ENCODE measurements at regions of chr6 and their contacts with region 1.

Region 1: DNA sequence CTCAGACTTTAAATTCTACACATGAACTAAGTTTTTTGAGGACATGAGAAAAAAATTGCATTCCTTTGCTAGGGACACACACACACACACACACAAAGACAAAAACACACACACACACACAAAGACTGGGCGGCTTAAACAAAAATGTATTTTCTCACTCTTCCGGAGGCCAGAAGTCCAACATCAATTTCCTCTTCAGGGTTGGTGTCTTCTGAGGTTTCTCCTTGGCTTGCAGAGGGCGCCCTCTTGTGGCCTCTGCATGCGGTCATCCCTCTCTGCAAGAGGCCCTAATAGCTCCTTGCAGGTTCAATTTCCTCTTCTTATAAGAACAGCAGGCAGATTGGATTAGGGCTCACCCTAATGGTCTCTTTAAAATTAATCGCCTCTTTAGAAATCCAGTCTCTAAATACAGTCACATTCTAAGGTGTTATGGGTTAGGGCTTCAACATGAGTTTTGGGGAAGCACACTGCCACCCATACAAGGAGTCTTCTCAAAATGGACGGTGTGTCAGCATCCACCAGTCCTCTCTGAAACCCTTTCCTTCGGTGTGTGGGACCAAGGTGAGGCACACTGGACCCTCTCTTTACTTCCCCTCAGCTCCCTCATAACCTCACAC is 61.4 kb downstream of the GPR6 start:
- DNase-seq: peak; percentile 90
- H3K4me3 Mint-ChIP-seq: peak overlapping the region; percentile 68
- H3K27ac Mint-ChIP-seq: peak overlapping the region; percentile 22
- H3K4me1 Mint-ChIP-seq: peaks cover 15% of the 10 kb centered on the region
- H3K27me3 Mint-ChIP-seq: no peaks in the 10 kb centered on the region
- CTCF ChIP-seq: peak; percentile 85

Region 2: DNA sequence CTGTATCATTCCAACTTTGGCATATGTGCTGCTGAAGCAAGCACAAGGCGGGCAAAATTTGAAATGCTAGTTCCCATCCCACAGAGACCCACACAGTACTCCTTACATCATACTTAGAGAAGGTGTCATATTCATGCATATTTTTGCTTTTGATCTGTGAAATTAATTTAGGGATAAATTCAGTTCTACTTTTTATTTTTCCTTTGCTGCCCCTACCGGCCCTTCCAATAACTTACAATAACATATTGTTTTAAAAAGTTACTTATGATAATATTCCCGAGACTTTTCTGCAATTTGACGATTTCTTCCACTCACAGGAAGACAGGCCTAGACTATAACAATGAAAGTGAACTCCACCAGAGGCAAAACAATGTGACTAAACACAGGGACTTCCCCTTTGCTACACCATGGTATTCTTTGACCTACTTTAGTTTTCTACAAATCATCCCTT is 979.9 kb before region 1 on chr6:
- CTCF ChIA-PET with region 1: no interaction called
- POLR2A ChIA-PET with region 1: no interaction called
- intact Hi-C with region 1: no loop called
- DNase-seq: peak; percentile 71
- H3K4me3 Mint-ChIP-seq: peak overlapping the region; percentile 61
- H3K27ac Mint-ChIP-seq: peak overlapping the region; percentile 96
- H3K4me1 Mint-ChIP-seq: peaks cover 52% of the 10 kb centered on the region
- H3K27me3 Mint-ChIP-seq: no peaks in the 10 kb centered on the region
- CTCF ChIP-seq: peak; percentile 56

Region 3: GRCh38 chr6:109526905-109527628 is 512.4 kb before region 1 on chr6:
- CTCF ChIA-PET with region 1: interaction called, 22 read pairs
- POLR2A ChIA-PET with region 1: no interaction called
- intact Hi-C with region 1: loop called (anchors 1 kb)
- DNase-seq: peak; percentile 80
- H3K4me3 Mint-ChIP-seq: no peak overlapping the region
- H3K27ac Mint-ChIP-seq: no peak overlapping the region
- H3K4me1 Mint-ChIP-seq: peaks cover 6% of the 10 kb centered on the region
- H3K27me3 Mint-ChIP-seq: peaks cover 2% of the 10 kb centered on the region
- CTCF ChIP-seq: peak; percentile 70

Region 4: GRCh38 chr6:109705258-109705657 is 334.2 kb before region 1 on chr6:
- CTCF ChIA-PET with region 1: interaction called, 337 read pairs
- POLR2A ChIA-PET with region 1: interaction called, 3 read pairs
- intact Hi-C with region 1: loop called (anchors 1 kb)
- DNase-seq: peak; percentile 88
- H3K4me3 Mint-ChIP-seq: no peak overlapping the region
- H3K27ac Mint-ChIP-seq: no peak overlapping the region
- H3K4me1 Mint-ChIP-seq: peaks cover 5% of the 10 kb centered on the region
- H3K27me3 Mint-ChIP-seq: no peaks in the 10 kb centered on the region
- CTCF ChIP-seq: peak; percentile 95

Region 5: GRCh38 chr6:109783250-109783986 is 256.1 kb before region 1 on chr6:
- CTCF ChIA-PET with region 1: interaction called, 12 read pairs
- POLR2A ChIA-PET with region 1: no interaction called
- intact Hi-C with region 1: no loop called
- DNase-seq: peak; percentile 13
- H3K4me3 Mint-ChIP-seq: no peak overlapping the region
- H3K27ac Mint-ChIP-seq: no peak overlapping the region
- H3K4me1 Mint-ChIP-seq: no peaks in the 10 kb centered on the region
- H3K27me3 Mint-ChIP-seq: no peaks in the 10 kb centered on the region
- CTCF ChIP-seq: no peak

Region 6: GRCh38 chr6:110029144-110029543 is 10.3 kb before region 1 on chr6:
- CTCF ChIA-PET with region 1: interaction called, 24 read pairs
- POLR2A ChIA-PET with region 1: interaction called, 3 read pairs
- intact Hi-C with region 1: no loop called
- DNase-seq: no peak
- H3K4me3 Mint-ChIP-seq: no peak overlapping the region
- H3K27ac Mint-ChIP-seq: no peak overlapping the region
- H3K4me1 Mint-ChIP-seq: no peaks in the 10 kb centered on the region
- H3K27me3 Mint-ChIP-seq: no peaks in the 10 kb centered on the region
- CTCF ChIP-seq: no peak

Region 7: DNA sequence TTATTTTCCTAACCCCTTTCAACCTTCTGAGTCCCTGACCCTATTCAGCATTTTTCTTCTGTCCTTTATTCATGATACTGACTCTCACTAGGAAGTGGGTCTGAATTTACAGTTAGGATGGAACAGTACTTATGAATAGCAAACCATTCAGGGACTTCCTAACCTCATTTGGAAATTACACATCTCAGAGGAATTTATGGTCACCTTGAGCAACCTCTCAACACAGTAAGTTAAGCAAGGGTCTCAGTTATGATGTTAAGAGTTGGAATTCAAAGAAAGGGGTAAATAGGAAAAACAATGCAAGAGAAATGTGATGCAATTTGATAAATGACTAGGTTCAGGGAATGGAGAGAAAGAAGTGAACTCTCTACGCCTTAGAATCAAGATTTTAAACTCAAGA is 35.9 kb after region 1 on chr6:
- CTCF ChIA-PET with region 1: interaction called, 10 read pairs
- POLR2A ChIA-PET with region 1: no interaction called
- intact Hi-C with region 1: no loop called
- DNase-seq: peak; percentile 52
- H3K4me3 Mint-ChIP-seq: no peak overlapping the region
- H3K27ac Mint-ChIP-seq: no peak overlapping the region
- H3K4me1 Mint-ChIP-seq: peaks cover 11% of the 10 kb centered on the region
- H3K27me3 Mint-ChIP-seq: no peaks in the 10 kb centered on the region
- CTCF ChIP-seq: no peak

Region 8: DNA sequence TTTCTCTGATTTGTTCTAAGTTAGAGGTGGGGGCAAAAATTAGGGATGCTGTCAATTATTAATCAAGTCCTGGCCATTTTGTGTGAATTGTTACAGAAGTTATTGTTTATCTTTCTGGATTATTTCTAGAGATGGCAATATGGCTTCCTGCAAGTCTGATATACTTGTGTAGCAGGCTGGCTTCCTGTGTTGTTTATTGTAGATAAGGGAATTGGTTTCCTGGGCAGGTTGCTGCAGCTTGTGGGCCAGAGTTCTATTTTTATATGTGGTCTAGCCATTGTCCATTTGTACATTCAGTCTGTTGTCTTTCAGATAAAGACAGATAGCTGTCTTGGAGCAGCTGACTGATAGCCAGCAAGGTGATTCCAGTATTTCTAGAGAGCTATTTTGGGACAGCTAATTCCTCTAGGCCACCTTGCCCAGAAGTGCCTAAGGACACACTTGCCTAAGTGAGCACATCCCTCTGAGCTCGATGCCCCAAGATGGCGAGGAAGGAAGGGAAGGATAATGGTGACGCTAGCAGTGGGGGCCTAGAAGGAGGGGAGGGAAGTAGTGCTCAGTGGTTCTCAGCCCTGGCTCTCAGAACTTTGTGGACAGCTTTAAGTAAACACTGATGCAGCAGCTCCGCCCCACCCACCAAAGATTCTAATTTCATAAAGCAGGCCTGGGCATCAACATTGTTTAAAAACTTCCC is 350.4 kb after region 1 on chr6:
- CTCF ChIA-PET with region 1: interaction called, 93 read pairs
- POLR2A ChIA-PET with region 1: interaction called, 4 read pairs
- intact Hi-C with region 1: loop called (anchors 1 kb)
- DNase-seq: no peak
- H3K4me3 Mint-ChIP-seq: no peak overlapping the region
- H3K27ac Mint-ChIP-seq: no peak overlapping the region
- H3K4me1 Mint-ChIP-seq: no peaks in the 10 kb centered on the region
- H3K27me3 Mint-ChIP-seq: no peaks in the 10 kb centered on the region
- CTCF ChIP-seq: no peak

Measured in MCF 10A (cell line).